Mammary epithelial cell (primary cell): ENCODE measurements at regions of chr7 and their contacts with region 1.

Region 1: DNA sequence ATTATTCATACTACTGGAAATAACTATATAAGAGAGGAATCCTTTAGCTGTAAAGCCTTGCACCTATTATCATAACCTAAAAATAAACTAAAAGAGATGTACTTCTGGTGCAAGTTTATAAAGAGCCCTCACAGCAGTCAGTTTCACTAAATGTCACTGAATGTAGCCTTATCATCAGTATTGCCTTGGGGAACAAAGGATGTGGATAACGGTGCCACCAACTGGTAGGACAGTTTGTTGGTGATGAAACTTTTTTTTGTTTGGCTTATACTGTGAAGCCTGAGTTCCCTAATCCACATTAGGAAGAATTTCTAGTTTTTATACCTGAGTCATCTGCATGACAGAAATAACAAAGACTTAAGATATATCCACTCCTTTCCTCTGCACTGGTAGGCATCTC is 117.9 kb upstream of the COL1A2 start:
- DNase-seq: peak; percentile 20
- H3K4me3 ChIP-seq: no peak overlapping the region
- H3K27ac ChIP-seq: no peak overlapping the region
- H3K4me1 ChIP-seq: no peaks in the 10 kb centered on the region
- H3K27me3 ChIP-seq: peaks cover 5% of the 10 kb centered on the region
- CTCF ChIP-seq: peak; percentile 24 to 55

Region 2: GRCh38 chr7:93622036-93623033 is 654.5 kb before region 1 on chr7:
- CTCF ChIA-PET with region 1: no interaction called
- dilution Hi-C with region 1: no loop called
- in situ Hi-C with region 1: no loop called
- intact Hi-C with region 1: loop called (anchors 1 kb)
- DNase-seq: peak; percentile 18
- H3K4me3 ChIP-seq: no peak overlapping the region
- H3K27ac ChIP-seq: no peak overlapping the region
- H3K4me1 ChIP-seq: no peaks in the 10 kb centered on the region
- H3K27me3 ChIP-seq: peaks cover 2% of the 10 kb centered on the region
- CTCF ChIP-seq: peak; percentile 43 to 57

Region 3: GRCh38 chr7:93715234-93715633 is 561.6 kb before region 1 on chr7:
- CTCF ChIA-PET with region 1: no interaction called
- dilution Hi-C with region 1: no loop called
- in situ Hi-C with region 1: no loop called
- intact Hi-C with region 1: loop called (anchors 1 kb)
- DNase-seq: peak; percentile 16
- H3K4me3 ChIP-seq: no peak overlapping the region
- H3K27ac ChIP-seq: no peak overlapping the region
- H3K4me1 ChIP-seq: peaks cover 18% of the 10 kb centered on the region
- H3K27me3 ChIP-seq: peaks cover 14% of the 10 kb centered on the region
- CTCF ChIP-seq: peak; percentile 57 to 62

Region 4: GRCh38 chr7:93799750-93800357 is 476.9 kb before region 1 on chr7:
- CTCF ChIA-PET with region 1: no interaction called
- dilution Hi-C with region 1: no loop called
- in situ Hi-C with region 1: no loop called
- intact Hi-C with region 1: loop called (anchors 1 kb)
- DNase-seq: peak; percentile 12
- H3K4me3 ChIP-seq: no peak overlapping the region
- H3K27ac ChIP-seq: no peak overlapping the region
- H3K4me1 ChIP-seq: no peaks in the 10 kb centered on the region
- H3K27me3 ChIP-seq: peaks cover under 1% of the 10 kb centered on the region
- CTCF ChIP-seq: peak; percentile 60 to 64

Region 5: DNA sequence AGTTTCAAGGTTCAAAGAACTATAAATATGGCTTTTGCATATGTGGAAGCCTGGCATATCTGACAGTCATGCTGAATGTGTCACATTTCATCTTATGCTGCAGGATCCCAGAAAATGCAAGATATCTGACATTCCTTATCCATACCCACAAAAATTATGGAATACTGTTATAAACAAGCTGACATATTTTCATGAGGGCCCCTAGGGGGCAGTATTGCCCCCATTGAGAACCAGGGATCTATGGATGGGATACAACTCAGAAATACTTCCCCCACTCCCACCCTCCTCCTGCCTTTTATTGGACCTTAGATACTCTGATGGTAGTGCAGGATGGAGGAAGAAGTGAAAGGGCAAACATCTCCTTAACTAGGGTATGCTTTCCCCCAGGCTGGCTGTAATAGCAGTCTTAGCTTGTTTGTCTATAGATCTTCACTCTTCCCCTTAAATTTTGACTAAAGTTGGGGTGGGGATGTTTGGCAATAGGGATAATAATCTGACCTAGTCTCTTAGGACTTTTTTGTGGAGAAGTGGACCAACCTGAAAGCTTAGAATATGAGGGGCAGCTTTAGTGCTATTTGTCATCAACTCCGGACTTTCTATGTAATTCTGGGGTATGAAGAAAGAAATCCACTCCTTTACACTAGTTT is 373.9 kb before region 1 on chr7:
- CTCF ChIA-PET with region 1: no interaction called
- dilution Hi-C with region 1: no loop called
- in situ Hi-C with region 1: no loop called
- intact Hi-C with region 1: loop called (anchors 1 kb)
- DNase-seq: no peak
- H3K4me3 ChIP-seq: no peak overlapping the region
- H3K27ac ChIP-seq: no peak overlapping the region
- H3K4me1 ChIP-seq: no peaks in the 10 kb centered on the region
- H3K27me3 ChIP-seq: peaks cover 6% of the 10 kb centered on the region
- CTCF ChIP-seq: peak; percentile 68 to 80

Region 6: DNA sequence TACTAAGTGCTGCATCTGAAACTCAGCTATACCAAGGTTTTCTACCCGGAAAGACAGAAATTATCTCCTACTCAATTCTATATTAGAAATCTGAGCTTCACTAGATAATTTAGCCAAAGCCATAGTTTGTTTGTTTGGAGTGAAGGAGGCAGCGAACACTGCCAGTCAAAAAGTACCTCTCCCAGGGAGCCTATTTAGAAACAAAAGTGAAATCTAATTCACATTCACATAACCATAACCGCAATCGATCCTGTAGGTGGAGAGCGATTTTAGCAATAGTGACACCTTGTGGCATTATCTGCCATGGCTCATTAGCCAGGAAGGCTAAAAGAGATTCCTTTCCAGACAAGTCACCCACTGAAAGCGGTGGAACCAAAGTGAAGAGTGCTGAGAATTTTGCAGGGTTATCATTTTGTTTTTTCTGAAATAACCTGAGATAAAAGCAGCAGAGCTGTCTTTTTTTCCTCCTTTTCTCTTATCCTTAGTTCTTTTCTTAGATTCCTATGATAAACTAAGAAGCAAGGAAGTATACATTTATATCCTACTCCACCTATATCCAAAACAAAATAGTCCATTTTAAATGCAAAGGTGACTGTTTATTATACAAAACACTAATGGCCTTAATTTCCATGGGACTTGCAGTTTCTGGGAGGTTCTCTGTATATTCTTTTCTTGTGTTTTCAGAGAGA is 189.0 kb before region 1 on chr7:
- CTCF ChIA-PET with region 1: no interaction called
- dilution Hi-C with region 1: no loop called
- in situ Hi-C with region 1: no loop called
- intact Hi-C with region 1: loop called (anchors 2 kb)
- DNase-seq: peak; percentile 62
- H3K4me3 ChIP-seq: no peak overlapping the region
- H3K27ac ChIP-seq: no peak overlapping the region
- H3K4me1 ChIP-seq: no peaks in the 10 kb centered on the region
- H3K27me3 ChIP-seq: peaks cover 8% of the 10 kb centered on the region
- CTCF ChIP-seq: peak; percentile 82 to 86

Region 7: DNA sequence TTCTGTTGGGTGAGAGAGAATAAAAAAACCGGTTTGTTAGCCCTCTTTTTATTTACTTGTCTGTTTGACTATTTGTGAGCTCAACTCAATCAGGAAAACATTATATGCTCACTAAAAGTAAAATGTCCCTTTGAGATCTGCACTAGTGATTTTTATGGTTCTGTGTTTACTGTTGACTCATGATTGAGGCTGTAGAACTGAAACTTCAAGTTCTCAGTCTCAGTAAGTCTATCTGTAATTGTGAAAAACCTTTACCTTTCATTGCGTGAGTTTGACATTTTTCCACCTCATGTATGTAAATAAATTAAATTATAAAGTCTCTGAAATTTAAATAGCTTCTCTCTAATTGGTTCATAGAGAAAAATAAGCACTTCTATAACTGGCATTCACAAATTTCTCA is 215.8 kb after region 1 on chr7:
- CTCF ChIA-PET with region 1: no interaction called
- dilution Hi-C with region 1: no loop called
- in situ Hi-C with region 1: no loop called
- intact Hi-C with region 1: no loop called
- DNase-seq: no peak
- H3K4me3 ChIP-seq: no peak overlapping the region
- H3K27ac ChIP-seq: no peak overlapping the region
- H3K4me1 ChIP-seq: no peaks in the 10 kb centered on the region
- H3K27me3 ChIP-seq: no peaks in the 10 kb centered on the region
- CTCF ChIP-seq: no peak